ENCODE measurements at regions of chr19 and their contacts with region 1.

Region 1: GRCh38 chr19:39846176-39846677 is at the start of gene FBL:
- DNase-seq: peak; percentile 100
- H3K4me3 Mint-ChIP-seq: peak within 1 kb of the TSS; percentile 93
- H3K27ac Mint-ChIP-seq: peak within 1 kb of the TSS; percentile 92
- H3K4me1 Mint-ChIP-seq: peaks cover 42% of the 10 kb centered on the region
- H3K27me3 Mint-ChIP-seq: no peaks in the 10 kb centered on the region
- total RNA-seq, gene FBL: 605 and 614 TPM in 2 replicates

Region 2: DNA sequence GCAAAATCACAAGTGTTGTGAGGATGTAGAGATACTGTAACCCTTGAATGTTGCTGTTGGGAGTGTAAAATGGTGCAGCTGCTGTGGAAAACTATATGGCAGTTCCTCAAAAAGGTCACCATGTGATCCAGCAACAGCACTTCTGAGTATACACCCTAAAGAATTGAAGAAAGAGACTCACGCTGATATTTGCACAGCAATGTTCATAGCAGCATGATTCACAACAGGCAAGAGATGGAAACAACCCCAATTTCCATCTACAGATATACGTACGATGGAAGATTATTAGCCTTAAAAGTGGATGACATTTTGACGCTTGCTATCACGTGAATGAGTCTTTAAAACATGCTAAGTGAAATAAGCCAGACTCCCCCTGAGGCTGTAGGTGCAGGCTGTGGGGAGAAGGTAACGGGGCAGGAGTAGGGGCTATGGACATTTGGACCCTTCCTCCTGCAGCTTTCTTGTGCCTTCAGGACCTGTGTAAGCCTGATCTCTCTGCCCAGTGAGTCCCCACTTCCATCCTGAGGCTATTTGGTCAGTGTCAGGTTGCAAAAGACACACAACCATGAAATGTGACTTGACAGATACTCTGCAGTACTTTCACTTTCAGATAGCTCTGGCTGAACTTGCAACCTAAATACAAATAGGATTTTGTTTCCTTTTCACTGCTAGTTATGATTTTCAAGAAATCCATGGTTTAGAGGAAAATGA is 288.6 kb before region 1 on chr19:
- intact Hi-C with region 1: loop called (anchors 10 kb)
- DNase-seq: peak; percentile 69
- H3K4me3 Mint-ChIP-seq: peak overlapping the region; percentile 72
- H3K27ac Mint-ChIP-seq: peak overlapping the region; percentile 85
- H3K4me1 Mint-ChIP-seq: peaks cover 32% of the 10 kb centered on the region
- H3K27me3 Mint-ChIP-seq: no peaks in the 10 kb centered on the region

Region 3: GRCh38 chr19:39679056-39679790 is 167.0 kb before region 1 on chr19:
- intact Hi-C with region 1: loop called (anchors 5 kb)
- DNase-seq: peak; percentile 83
- H3K4me3 Mint-ChIP-seq: peak overlapping the region; percentile 76
- H3K27ac Mint-ChIP-seq: peak overlapping the region; percentile 80
- H3K4me1 Mint-ChIP-seq: peaks cover 42% of the 10 kb centered on the region
- H3K27me3 Mint-ChIP-seq: no peaks in the 10 kb centered on the region

Region 4: DNA sequence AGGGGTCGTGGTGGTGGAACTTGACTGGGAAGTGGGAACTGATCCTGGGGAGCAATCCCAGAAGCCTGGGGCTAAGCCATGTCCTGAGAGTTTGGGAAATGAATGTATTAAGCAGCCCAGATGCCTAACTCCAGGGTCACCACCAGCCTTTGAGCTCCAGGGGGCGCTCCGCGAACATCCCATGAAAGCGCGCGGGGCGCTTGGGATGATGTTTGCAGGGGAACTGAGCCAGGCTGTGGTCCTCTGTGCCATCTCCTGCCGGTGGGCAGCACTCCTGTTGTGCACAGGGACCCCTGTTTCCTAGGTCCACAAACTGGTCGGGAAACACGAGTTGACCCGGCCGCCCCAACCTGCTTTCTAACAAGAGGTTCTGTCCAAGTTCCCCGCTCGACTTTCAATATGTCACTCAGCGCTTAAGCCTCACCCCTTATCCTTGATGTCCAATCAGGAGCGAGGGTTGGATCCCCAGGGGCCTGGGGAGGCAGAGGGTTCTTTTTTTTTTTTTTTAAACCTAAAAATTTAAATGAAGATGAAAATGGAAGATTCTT is 53.2 kb before region 1 on chr19:
- intact Hi-C with region 1: loop called (anchors 1 kb)
- DNase-seq: peak; percentile 93
- H3K4me3 Mint-ChIP-seq: peak overlapping the region; percentile 83
- H3K27ac Mint-ChIP-seq: no peak overlapping the region
- H3K4me1 Mint-ChIP-seq: peaks cover 11% of the 10 kb centered on the region
- H3K27me3 Mint-ChIP-seq: peaks cover 20% of the 10 kb centered on the region

Region 5: DNA sequence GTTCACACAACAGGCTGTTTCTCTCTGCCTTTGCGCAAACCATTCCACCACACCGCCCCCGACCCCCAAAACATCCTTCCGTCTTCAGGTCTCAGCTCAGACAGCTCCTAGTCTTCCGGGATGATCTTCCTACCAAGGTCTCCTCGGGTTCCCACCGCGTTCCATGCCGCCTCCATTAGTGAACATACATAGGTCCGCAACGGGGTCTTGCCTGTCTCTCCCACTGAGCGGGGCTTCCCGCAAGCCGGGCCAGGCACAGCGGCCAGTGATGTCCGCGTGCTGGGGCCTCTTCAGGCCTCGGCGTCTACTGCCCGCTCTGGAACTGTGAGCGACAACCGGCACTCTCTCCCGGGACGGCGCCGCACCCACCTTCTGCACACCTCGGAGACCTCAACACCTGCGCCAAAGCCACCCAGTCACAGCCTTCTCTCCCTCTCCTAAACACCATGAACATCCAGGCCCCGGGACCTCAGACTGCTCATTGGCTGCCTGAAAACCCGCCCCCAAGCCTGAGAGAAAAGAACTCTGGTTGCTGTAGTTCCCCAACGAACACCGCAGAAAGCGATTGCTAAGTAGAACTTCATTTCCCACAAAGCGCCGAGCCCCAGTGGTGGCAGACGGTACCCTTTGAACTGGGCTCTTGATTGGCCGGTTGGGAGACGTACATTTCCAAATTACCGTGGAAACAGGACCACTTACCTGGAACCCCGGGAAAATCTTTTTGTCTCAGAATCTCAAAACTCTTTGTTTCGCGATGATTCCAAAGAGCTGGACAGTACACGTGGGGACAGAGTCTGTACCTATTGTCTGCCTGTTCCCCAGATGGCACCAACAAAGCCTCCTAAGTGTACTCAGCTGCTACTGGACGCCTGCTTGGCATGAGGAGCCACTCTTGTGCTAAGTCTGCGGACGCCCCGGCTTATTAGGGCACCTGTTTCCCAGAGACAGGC is 21.8 kb before region 1 on chr19:
- intact Hi-C with region 1: loop called (anchors 1 kb)
- DNase-seq: peak; percentile 96
- H3K4me3 Mint-ChIP-seq: no peak overlapping the region
- H3K27ac Mint-ChIP-seq: no peak overlapping the region
- H3K4me1 Mint-ChIP-seq: peaks cover 5% of the 10 kb centered on the region
- H3K27me3 Mint-ChIP-seq: no peaks in the 10 kb centered on the region

Region 6: GRCh38 chr19:39833464-39834286 is 12.6 kb before region 1 on chr19 and contains the start of gene DYRK1B:
- intact Hi-C with region 1: loop called (anchors 1 kb)
- DNase-seq: peak; percentile 99
- H3K4me3 Mint-ChIP-seq: peak within 1 kb of the TSS; percentile 84
- H3K27ac Mint-ChIP-seq: peak within 1 kb of the TSS; percentile 91
- H3K4me1 Mint-ChIP-seq: peaks cover 32% of the 10 kb centered on the region
- H3K27me3 Mint-ChIP-seq: peaks cover 2% of the 10 kb centered on the region
- total RNA-seq, gene DYRK1B: 3.6 and 4.5 TPM in 2 replicates

Region 7: DNA sequence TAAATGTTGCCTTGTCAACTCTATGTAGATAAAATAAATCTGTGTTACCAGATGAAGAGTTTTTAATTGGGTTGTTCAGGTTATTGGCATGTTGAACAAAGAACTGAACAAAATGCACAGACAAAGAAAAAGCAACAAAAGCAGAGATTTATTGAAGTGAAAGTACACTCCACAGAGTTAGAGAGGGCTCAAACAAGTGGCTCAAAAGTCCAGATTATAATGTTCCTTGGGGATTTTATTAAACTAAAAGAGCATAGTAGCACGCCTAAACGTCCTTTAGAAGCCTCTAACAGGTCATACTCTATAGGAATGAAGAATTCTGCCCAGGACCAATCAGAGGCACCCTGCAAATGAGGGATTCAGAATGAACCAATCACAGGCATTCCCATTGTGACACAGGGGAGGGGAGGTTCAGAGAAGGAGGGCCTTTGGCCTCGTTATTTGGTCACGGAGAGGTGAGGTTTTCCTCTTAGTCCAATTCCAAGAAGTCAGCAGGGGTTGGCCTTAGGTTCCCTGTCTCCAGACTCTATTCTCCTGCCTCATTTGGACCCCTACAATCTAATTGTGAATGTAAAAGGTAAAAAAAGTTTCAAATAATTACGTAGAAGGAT is 137.6 kb after region 1 on chr19:
- intact Hi-C with region 1: no loop called
- DNase-seq: no peak
- H3K4me3 Mint-ChIP-seq: no peak overlapping the region
- H3K27ac Mint-ChIP-seq: no peak overlapping the region
- H3K4me1 Mint-ChIP-seq: peaks cover 2% of the 10 kb centered on the region
- H3K27me3 Mint-ChIP-seq: no peaks in the 10 kb centered on the region

Region 8: GRCh38 chr19:40266119-40266518 is 419.9 kb after region 1 on chr19:
- intact Hi-C with region 1: no loop called
- DNase-seq: no peak
- H3K4me3 Mint-ChIP-seq: no peak overlapping the region
- H3K27ac Mint-ChIP-seq: no peak overlapping the region
- H3K4me1 Mint-ChIP-seq: peaks cover 15% of the 10 kb centered on the region
- H3K27me3 Mint-ChIP-seq: no peaks in the 10 kb centered on the region

Measured in activated CD4-positive, alpha-beta T cell treated with anti-CD3 and anti-CD28 coated beads, Interleukin-2, amount 10 ng/mL, durations not matched to agents 24 days and 14 days (primary cell).